ENCODE measurements at regions of chr10 and their contacts with region 1.

Region 1: DNA sequence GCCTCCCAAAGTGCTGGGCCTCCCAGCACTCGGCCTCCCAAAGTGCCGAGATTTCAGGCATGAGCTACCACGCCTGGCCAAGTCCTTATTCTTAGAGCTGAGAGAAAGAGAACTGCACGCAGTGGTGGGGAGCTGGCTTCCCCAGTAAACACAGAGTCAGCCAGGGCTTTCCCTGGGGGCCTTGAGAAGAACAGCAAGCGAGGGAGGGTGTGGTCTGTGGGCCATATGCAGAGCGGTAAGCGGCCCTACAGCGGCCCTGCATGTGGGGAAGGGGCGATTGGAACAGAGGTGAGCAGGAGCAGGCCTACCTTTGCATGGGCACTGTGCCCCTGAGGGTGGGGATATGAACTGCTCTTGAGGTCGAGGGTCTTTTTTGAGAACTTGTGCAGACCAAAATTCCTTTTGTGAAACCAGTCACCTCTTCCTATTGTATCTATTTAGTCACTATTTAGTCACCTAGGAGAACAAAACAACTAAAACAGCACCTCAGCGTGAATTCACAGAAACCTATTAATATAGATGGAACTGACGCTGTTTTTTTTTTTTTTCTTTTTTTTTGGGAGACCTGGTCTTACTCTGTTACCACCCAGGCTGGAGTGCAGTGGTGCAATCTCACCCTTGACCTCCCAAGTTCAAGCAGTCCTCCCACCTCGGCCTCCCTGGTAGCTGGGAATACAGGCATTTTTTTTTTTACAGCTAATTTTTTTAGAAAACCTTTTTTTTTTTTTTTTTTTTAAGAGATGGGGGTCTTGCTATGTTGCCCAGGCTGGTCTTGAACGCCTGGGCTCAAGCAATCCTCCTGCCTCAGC is 36.9 kb upstream of the SH2D4B start:
- ATAC-seq: peak in 1 of 8 experiments; percentile 0
- H3K4me3 ChIP-seq: no peak overlapping the region
- H3K27ac ChIP-seq: no peak overlapping the region
- H3K4me1 ChIP-seq: peaks cover 17 to 40% of the 10 kb centered on the region in 2 donors

Region 2: GRCh38 chr10:80110986-80111385 is 389.8 kb before region 1 on chr10:
- in situ Hi-C with region 1: no loop called
- ATAC-seq: no peak
- H3K4me3 ChIP-seq: no peak overlapping the region
- H3K27ac ChIP-seq: no peak overlapping the region
- H3K4me1 ChIP-seq: no peaks in the 10 kb centered on the region

Region 3: GRCh38 chr10:80260295-80261243 is 240.2 kb before region 1 on chr10:
- in situ Hi-C with region 1: no loop called
- ATAC-seq: peak in 7 of 8 experiments; percentile 47 to 69 (median 60)
- H3K4me3 ChIP-seq: no peak overlapping the region
- H3K27ac ChIP-seq: no peak overlapping the region
- H3K4me1 ChIP-seq: no peaks in the 10 kb centered on the region

Region 4: DNA sequence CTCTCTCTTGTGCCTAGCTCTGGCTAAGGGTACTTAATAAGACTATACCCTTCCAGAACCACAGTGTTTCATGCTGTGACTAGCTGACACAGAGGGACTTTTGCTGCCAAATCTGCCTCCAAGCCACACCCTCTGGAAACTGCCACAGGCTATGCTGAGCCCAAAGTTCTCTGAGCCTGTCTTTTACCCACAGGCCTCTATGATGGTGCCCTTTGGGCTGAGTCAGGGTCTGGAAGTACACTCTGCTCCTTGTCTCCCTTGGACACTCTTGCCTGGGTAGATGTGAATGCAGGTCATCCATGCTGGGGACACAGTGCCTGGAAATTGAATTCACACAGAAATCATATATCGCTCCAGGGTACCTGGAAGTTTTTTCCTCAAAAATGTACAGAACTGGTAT is 166.8 kb before region 1 on chr10:
- in situ Hi-C with region 1: no loop called
- ATAC-seq: peak in 3 of 8 experiments; percentile 44 to 97 (median 92)
- H3K4me3 ChIP-seq: no peak overlapping the region
- H3K27ac ChIP-seq: no peak overlapping the region
- H3K4me1 ChIP-seq: no peaks in the 10 kb centered on the region

Region 5: DNA sequence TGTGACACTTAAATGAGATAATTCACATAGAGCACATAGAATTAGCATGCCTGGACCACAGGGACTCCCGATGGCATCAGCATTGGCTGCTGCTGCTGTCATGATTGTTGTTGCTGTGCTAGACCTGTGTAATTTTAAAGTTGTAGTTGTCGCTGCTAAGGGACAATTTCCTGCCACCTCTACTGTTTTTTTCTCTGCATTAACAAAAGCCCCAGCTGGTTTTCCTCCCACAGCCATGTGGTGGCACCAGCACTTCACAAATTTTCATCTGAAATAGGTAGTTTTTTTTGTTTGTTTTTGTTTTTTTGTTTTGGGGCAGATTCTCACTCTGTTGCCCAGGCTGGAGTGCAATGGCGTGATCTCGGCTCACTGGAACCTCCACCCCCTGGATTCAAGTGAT is 117.8 kb before region 1 on chr10:
- in situ Hi-C with region 1: loop called in 1 of 9 experiments (anchors 25 kb)
- ATAC-seq: peak in 5 of 8 experiments; percentile 9 to 60 (median 41)
- H3K4me3 ChIP-seq: no peak overlapping the region
- H3K27ac ChIP-seq: no peak overlapping the region
- H3K4me1 ChIP-seq: no peaks in the 10 kb centered on the region

Region 6: DNA sequence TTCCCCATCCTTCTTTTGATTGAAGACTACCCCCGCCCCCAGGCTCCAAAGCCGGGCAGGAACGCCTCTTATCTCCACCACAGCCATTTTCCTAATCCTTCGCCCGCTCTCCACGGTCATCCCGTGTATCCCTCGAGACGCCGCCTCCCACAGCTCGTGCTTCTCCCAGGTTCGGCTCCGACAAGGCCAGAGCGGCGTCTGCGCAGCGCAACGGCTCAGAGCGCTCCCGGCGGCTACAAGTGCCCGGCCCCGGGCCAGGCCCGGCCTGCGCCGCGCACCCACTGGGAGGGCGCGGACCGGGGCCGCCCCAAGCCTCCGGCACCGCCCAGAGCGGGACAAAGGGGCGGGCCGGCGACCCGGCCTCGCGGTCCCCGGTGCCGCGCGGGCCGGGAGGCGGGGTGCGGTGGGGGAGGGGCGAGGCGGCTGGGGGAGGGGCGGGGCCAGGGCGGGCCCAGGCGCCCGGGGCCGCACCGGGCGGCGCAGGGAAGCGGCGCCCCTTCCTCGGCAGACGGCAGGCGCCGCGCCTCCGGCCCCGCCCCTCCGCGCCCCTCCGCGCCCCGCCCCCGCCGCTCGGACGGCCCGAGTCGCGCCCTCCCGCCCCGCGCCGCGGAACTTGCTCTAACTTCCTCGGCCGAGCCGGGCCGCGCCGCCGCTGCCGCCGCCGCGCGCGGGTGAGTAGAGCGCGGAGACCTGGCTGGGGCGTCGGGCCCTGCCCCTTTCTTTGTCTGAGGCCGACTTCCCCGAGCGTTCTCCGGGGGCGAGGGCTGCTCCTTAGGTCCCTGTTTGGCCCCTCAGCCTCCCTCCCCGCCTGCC is 46.9 kb before region 1 on chr10 and contains the start of gene TSPAN14:
- in situ Hi-C with region 1: loop called in 1 of 9 experiments (anchors 10 kb)
- ATAC-seq: peak; percentile 76 to 87 (median 84)
- H3K4me3 ChIP-seq: peak within 1 kb of the TSS; percentile 50 to 96 (median 74)
- H3K27ac ChIP-seq: peak within 1 kb of the TSS; percentile 75 to 79
- H3K4me1 ChIP-seq: peaks cover 11 to 12% of the 10 kb centered on the region in 2 donors
- total RNA-seq, gene TSPAN14: 12.4 to 44.8 (median 16.1) TPM